Activated CD8-positive, alpha-beta T cell treated with anti-CD3 and anti-CD28 coated beads for 36 hours (primary cell): ENCODE measurements at regions of chr2 and their contacts with region 1.

Region 1: DNA sequence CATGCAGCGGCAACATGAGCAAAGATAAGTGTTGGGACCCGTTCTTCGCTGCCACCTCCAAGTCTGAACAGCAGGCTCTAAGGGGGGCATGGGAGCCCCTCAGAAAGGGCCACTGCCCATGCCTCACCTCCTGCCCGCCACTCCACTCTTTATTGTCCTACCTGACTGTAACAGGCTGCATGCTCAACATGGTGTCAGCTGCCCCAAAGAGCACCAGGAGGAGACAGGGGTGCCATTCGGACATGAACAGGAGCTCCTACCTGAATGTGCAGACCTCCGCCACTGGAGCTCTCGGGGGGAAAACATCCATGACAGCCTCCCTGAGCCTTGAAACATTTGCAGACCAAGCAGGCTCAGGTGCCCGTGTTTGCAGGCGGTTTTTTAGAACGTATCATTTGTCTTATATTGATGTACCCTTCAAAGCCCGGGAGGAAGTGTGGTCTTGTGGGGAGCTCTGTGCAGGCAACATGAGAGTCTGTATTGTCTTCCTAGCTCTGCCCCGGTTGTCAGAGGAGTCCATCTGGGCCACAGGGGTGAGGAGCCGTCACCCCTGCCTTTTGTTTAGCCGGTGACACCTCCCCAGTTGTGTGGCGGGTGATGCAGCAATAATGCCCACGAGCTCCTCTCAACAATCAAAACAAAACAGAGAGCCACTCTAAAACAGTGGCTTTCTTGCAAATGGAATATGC is 35.1 kb upstream of the CD8A start:
- DNase-seq: peak; percentile 90
- ATAC-seq: peak; percentile 78
- H3K4me3 Mint-ChIP-seq: peak overlapping the region; percentile 91
- H3K27ac Mint-ChIP-seq: peak overlapping the region; percentile 93
- H3K4me1 Mint-ChIP-seq: peaks cover 74% of the 10 kb centered on the region
- H3K27me3 Mint-ChIP-seq: no peaks in the 10 kb centered on the region
- CTCF ChIP-seq: no peak

Region 2: DNA sequence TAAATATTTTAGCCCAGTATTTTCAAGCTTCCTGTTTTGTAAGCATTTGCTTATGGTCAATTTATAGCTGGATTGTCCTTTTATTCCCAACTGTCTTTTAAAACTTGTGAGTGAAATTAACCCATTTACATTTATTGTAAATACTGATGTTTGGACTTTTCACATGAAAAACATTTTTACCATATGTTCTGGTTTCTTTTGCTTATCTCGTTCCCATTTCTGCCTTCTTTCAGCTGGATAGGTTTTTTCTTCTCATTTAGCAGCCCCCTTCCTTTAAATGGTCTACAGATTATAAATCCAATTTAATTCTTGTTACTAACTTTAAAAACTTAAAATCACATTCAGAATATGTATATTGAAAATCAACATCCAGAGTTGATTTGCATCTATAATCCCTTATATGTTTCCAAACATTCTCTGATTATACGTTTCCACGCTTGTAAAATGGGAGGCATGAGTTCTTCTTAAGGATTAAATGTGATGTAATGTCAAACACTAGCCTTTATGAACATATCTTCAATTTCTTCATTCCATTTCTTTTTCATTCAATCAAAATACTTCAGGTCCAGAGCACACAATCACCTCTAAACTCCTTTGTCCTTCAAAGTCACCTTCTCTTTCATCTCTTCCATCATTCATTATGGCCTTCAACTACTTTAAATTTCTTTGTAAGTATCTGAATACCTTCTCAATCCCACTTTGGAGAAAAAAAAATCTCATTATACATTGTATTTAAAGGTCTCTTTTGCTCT is 385.8 kb before region 1 on chr2:
- CTCF ChIA-PET with region 1: no interaction called
- POLR2A ChIA-PET with region 1: no interaction called
- intact Hi-C with region 1: no loop called
- DNase-seq: no peak
- ATAC-seq: no peak
- H3K4me3 Mint-ChIP-seq: peak overlapping the region; percentile 94
- H3K27ac Mint-ChIP-seq: peak overlapping the region; percentile 100
- H3K4me1 Mint-ChIP-seq: peaks cover 32% of the 10 kb centered on the region
- H3K27me3 Mint-ChIP-seq: no peaks in the 10 kb centered on the region
- CTCF ChIP-seq: no peak

Region 3: GRCh38 chr2:86468162-86469033 is 357.4 kb before region 1 on chr2:
- CTCF ChIA-PET with region 1: no interaction called
- POLR2A ChIA-PET with region 1: no interaction called
- intact Hi-C with region 1: no loop called
- DNase-seq: peak; percentile 34
- ATAC-seq: peak; percentile 53
- H3K4me3 Mint-ChIP-seq: no peak overlapping the region
- H3K27ac Mint-ChIP-seq: peak overlapping the region; percentile 59
- H3K4me1 Mint-ChIP-seq: peaks cover 54% of the 10 kb centered on the region
- H3K27me3 Mint-ChIP-seq: no peaks in the 10 kb centered on the region
- CTCF ChIP-seq: no peak

Region 4: DNA sequence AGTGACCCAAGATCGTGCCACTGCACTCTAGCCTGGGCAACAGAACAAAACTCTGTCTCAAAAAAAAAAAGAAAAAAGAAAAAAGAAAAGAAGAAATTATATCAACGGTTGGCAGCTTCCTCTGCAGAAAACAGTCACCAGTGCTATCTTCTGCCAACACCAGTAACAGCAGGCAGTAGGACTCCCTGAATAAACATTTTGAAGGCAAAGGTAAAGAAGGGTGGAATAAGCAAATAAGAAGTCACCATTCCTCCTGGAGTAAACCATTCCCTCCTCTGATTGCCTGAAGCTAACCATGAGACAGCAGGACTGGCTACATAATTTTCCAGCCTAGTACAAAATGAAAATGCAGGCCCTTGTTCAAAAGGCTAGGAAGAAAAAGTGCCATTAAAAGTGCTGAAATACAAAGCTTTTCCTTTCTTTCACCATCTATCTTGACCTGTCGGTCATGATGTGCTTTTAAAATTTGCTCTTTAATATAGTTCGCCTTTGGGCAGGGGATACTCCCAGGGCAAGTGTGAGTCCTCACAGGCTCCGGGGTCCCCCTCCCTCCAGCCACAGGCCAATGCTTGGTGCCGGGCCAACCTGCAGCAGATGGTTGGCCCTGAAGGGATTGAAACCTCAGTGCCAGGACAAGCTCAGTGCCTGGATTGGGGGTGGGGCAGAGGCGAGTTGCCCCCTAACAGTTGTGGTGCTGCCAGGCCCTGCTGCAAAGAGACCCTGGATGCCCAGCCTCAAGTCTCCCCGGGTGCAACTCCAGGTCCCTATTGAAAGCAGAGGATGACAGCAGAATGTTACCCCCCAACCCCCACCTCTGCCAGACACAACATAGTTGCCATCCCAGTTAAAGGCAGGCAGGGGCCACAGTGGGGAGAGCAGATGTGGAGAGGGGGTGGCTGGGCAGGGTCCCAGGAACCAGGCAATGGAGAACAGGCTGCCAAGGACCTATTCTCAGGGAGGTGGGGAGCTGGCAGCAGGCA is 192.9 kb before region 1 on chr2:
- CTCF ChIA-PET with region 1: no interaction called
- POLR2A ChIA-PET with region 1: no interaction called
- intact Hi-C with region 1: no loop called
- DNase-seq: no peak
- ATAC-seq: no peak
- H3K4me3 Mint-ChIP-seq: no peak overlapping the region
- H3K27ac Mint-ChIP-seq: no peak overlapping the region
- H3K4me1 Mint-ChIP-seq: no peaks in the 10 kb centered on the region
- H3K27me3 Mint-ChIP-seq: no peaks in the 10 kb centered on the region
- CTCF ChIP-seq: no peak

Region 5: GRCh38 chr2:86747711-86748639 is 77.9 kb before region 1 on chr2:
- CTCF ChIA-PET with region 1: no interaction called
- POLR2A ChIA-PET with region 1: no interaction called
- intact Hi-C with region 1: no loop called
- DNase-seq: peak; percentile 52
- ATAC-seq: peak; percentile 77
- H3K4me3 Mint-ChIP-seq: no peak overlapping the region
- H3K27ac Mint-ChIP-seq: peak overlapping the region; percentile 72
- H3K4me1 Mint-ChIP-seq: peaks cover 50% of the 10 kb centered on the region
- H3K27me3 Mint-ChIP-seq: no peaks in the 10 kb centered on the region
- CTCF ChIP-seq: no peak

Region 6: GRCh38 chr2:86783615-86784339 is 42.1 kb before region 1 on chr2:
- CTCF ChIA-PET with region 1: interaction called, 4 read pairs
- POLR2A ChIA-PET with region 1: interaction called, 23 read pairs
- intact Hi-C with region 1: no loop called
- DNase-seq: peak; percentile 67
- ATAC-seq: peak; percentile 4
- H3K4me3 Mint-ChIP-seq: peak overlapping the region; percentile 60
- H3K27ac Mint-ChIP-seq: peak overlapping the region; percentile 96
- H3K4me1 Mint-ChIP-seq: peaks cover 61% of the 10 kb centered on the region
- H3K27me3 Mint-ChIP-seq: no peaks in the 10 kb centered on the region
- CTCF ChIP-seq: no peak

Region 7: GRCh38 chr2:86790676-86791572 is 34.9 kb before region 1 on chr2 and contains the start of gene CD8A:
- CTCF ChIA-PET with region 1: interaction called, 5 read pairs
- POLR2A ChIA-PET with region 1: interaction called, 42 read pairs
- intact Hi-C with region 1: loop called (anchors 2 kb)
- DNase-seq: peak; percentile 91
- ATAC-seq: peak; percentile 32
- H3K4me3 Mint-ChIP-seq: peak within 1 kb of the TSS; percentile 96
- H3K27ac Mint-ChIP-seq: peak within 1 kb of the TSS; percentile 100
- H3K4me1 Mint-ChIP-seq: peaks cover 47% of the 10 kb centered on the region
- H3K27me3 Mint-ChIP-seq: no peaks in the 10 kb centered on the region
- CTCF ChIP-seq: no peak
- total RNA-seq, gene CD8A: 419 to 432 TPM

Region 8: DNA sequence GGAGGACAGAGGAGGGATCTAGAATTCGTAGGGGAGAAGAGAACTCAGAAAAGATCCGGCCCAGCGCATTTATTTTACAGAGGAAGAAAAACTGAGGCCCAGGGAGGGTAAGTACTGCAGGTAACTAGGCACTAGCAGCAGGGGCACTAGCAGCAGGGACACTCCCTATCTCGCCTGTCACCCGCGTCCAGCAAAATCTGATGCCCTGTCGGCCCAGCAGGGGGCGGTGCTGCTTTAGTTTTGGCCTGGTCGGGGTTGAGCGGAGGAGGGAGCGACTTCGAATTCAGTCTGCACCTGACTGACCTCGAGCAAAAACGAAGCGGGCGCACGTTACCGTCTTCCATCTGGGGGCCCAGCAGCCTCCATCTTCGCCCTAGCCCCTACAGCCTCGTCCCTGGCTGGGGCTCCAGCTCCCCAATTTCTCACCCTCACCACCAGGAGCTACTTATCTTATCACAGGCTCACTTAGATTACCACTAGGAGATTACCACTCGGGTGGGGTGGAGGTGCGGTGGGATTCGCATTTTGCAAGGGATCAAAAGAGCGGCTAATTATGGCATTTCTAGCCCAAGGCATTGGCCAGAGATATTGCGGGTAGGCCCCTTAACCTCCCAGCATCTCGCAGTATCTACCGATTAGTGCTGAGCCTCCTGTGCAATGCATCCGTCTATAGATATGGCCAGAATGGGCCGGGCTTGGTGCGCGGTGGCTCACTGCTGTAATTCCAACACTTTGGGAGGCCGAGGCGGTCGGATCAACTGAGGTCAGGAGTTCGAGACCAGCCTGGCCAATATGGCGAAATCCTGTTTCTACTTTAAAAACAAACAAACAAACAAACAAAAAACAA is 17.3 kb before region 1 on chr2:
- CTCF ChIA-PET with region 1: interaction called, 28 read pairs
- POLR2A ChIA-PET with region 1: interaction called, 129 read pairs
- intact Hi-C with region 1: no loop called
- DNase-seq: peak; percentile 98
- ATAC-seq: peak; percentile 72
- H3K4me3 Mint-ChIP-seq: peak overlapping the region; percentile 87
- H3K27ac Mint-ChIP-seq: peak overlapping the region; percentile 90
- H3K4me1 Mint-ChIP-seq: peaks cover 45% of the 10 kb centered on the region
- H3K27me3 Mint-ChIP-seq: no peaks in the 10 kb centered on the region
- CTCF ChIP-seq: peak; percentile 86

Region 9: GRCh38 chr2:86815611-86816010 is 10.2 kb before region 1 on chr2:
- CTCF ChIA-PET with region 1: interaction called, 18 read pairs
- POLR2A ChIA-PET with region 1: interaction called, 129 read pairs
- intact Hi-C with region 1: no loop called
- DNase-seq: peak; percentile 51
- ATAC-seq: peak; percentile 82
- H3K4me3 Mint-ChIP-seq: peak overlapping the region; percentile 32
- H3K27ac Mint-ChIP-seq: peak overlapping the region; percentile 87
- H3K4me1 Mint-ChIP-seq: peaks cover 83% of the 10 kb centered on the region
- H3K27me3 Mint-ChIP-seq: no peaks in the 10 kb centered on the region
- CTCF ChIP-seq: no peak